ENCODE measurements at regions of chr1 and their contacts with region 1.

Region 1: DNA sequence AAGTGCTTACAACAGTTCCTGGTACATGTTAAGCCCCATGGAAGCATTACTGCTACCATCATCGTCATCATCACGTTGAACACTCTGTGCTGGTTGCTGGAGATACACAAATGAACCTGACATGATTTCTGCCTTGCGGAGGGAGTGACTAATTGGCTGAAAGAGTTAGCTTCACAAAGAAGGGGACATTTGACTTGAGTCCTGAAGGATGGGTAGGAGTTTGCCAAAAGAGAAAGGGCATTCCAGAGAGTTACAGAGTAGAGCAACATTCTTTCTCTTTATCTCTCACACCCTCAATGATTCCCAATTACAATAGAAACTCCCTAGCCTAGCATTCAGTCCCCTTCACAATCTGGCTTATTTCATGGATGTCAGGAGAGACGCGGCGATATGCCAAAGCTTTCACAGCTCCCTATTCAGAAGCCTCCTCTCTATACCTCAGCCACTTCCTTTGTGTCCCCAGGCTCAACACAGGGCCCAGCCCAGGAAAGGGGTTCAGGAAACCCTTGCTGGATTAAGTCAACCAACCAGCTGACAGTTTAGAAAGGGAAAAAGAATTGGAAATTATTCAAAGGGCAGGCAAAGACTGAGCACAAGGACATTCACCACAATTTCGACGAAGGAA is 38.0 kb downstream of the SLC1A7 start:
- DNase-seq: no peak
- H3K4me3 ChIP-seq: no peak overlapping the region
- H3K27ac ChIP-seq: no peak overlapping the region
- H3K4me1 ChIP-seq: peaks cover 0 to 17% (median 7%) of the 10 kb centered on the region in 4 donors
- H3K27me3 ChIP-seq: no peaks in the 10 kb centered on the region
- CTCF ChIP-seq: no peak

Region 2: DNA sequence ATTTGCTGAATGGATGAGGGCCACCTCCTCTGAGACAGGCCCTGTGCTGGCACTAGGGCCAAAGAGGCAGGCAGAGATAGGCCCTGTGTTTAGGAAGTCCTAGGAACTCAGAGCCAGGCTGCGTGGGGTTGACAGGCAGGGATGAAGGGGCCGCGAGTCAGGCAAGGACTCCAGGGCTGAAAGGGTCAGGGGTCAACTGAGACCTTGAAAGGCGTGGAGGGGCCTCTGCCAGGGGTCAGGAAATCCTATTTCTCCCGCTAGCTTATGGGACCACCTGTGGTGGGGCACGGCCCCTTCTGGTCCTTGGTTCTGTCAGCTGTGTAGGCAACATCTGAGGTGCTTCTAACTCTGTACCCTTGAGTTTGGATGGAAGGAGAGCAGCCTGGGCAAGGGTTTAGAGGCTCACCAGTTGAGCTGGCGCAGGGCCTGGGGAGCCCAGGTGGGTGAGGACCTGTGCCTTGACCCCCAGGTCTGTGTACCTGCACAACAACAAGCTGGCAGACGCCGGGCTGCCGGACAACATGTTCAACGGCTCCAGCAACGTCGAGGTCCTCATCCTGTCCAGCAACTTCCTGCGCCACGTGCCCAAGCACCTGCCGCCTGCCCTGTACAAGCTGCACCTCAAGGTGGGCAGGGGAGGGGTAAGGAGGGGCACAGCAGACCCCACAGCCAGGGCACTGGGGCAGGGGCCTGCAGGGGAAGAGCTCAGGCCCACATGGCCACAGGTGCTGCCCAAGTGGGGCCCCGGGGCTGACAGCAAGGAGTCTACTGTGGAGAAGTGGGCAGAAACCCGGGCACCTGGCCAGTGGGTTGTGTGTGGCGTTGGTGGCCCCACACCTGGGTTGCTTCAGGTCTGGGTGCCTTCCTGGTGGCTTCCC is 27.4 kb before region 1 on chr1:
- intact Hi-C with region 1: loop called (anchors 1 kb)
- DNase-seq: peak in 1 of 2 donors; percentile 67
- H3K4me3 ChIP-seq: no peak overlapping the region
- H3K27ac ChIP-seq: no peak overlapping the region
- H3K4me1 ChIP-seq: no peaks in the 10 kb centered on the region
- H3K27me3 ChIP-seq: no peaks in the 10 kb centered on the region
- CTCF ChIP-seq: no peak